ENCODE measurements at regions of chr3 and their contacts with region 1.

Region 1: GRCh38 chr3:47824541-47825473 is 21.9 kb downstream of the DHX30 start:
- DNase-seq: peak; percentile 73 to 85 (median 82)
- H3K4me3 ChIP-seq: peak overlapping the region; percentile 91 to 93
- H3K4me3 Mint-ChIP-seq: peak overlapping the region; percentile 88 to 91 (median 90)
- H3K27ac ChIP-seq: peak overlapping the region; percentile 85
- H3K27ac Mint-ChIP-seq: peak overlapping the region; percentile 83 to 95 (median 92)
- H3K4me1 ChIP-seq: peaks cover 28% of the 10 kb centered on the region
- H3K4me1 Mint-ChIP-seq: peaks cover 13 to 43% (median 34%) of the 10 kb centered on the region in 4 donors
- H3K27me3 ChIP-seq: no peaks in the 10 kb centered on the region
- H3K27me3 Mint-ChIP-seq: no peaks in the 10 kb centered on the region

Region 2: DNA sequence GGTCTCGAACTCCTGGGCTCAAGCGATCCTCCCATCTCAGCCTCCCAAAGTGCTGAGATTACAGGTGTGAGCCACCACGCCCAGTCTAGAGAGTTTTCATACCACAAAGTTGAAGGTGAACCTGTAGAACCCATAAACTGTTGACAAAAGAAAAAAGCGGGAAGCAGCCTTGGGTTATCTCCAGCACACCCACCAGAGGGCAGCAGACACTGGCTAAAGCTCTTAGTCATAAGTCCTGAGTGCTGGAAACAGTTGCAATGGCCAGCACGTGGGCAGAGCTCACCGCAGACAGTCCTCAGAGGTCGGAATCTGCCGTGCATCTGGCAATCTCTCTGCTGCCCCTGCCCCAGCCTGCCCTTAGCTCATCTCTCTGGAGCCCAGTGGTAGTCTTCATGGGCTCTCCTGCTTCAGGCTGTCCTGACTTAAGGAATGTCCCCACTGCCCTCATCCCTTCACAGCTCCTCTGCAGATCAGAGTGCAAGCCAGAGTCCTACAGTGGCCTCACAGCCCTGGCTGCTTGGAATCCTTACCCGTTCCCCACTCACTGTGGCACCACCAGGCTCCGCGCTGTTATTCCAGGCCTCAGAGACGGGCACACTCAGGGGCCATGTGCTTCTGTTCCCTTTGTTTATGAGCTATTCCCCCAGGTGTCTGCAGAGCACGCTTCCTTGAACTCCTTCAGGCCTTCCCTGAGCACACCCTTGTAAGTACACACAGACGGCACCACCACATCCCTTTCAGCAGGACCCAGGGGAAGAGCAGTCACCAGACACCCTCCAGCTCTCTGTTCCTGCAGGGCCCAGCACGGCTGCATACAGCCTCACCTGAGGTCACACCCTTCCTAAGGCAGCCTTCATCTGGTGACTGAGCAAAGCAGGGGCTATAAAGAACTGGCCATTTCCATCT is 302.5 kb before region 1 on chr3:
- CTCF ChIA-PET with region 1: interaction called, 18 read pairs
- POLR2A ChIA-PET with region 1: no interaction called
- intact Hi-C with region 1: no loop called
- DNase-seq: peak; percentile 49 to 76 (median 65)
- H3K4me3 ChIP-seq: no peak overlapping the region
- H3K4me3 Mint-ChIP-seq: no peak overlapping the region
- H3K27ac ChIP-seq: no peak overlapping the region
- H3K27ac Mint-ChIP-seq: peak overlapping the region in 2 of 7 donors; percentile 66
- H3K4me1 ChIP-seq: no peaks in the 10 kb centered on the region
- H3K4me1 Mint-ChIP-seq: peaks cover 0 to 1% (median 0%) of the 10 kb centered on the region in 4 donors
- H3K27me3 ChIP-seq: no peaks in the 10 kb centered on the region
- H3K27me3 Mint-ChIP-seq: no peaks in the 10 kb centered on the region

Region 3: GRCh38 chr3:47813551-47814177 is 11.1 kb before region 1 on chr3:
- CTCF ChIA-PET with region 1: interaction called, 42 read pairs
- POLR2A ChIA-PET with region 1: interaction called, 4 read pairs
- intact Hi-C with region 1: no loop called
- DNase-seq: no peak
- H3K4me3 ChIP-seq: no peak overlapping the region
- H3K4me3 Mint-ChIP-seq: no peak overlapping the region
- H3K27ac ChIP-seq: no peak overlapping the region
- H3K27ac Mint-ChIP-seq: peak overlapping the region in 1 of 7 donors; percentile 50
- H3K4me1 ChIP-seq: no peaks in the 10 kb centered on the region
- H3K4me1 Mint-ChIP-seq: peaks cover 0 to 8% (median 5%) of the 10 kb centered on the region in 4 donors
- H3K27me3 ChIP-seq: no peaks in the 10 kb centered on the region
- H3K27me3 Mint-ChIP-seq: no peaks in the 10 kb centered on the region

Region 4: DNA sequence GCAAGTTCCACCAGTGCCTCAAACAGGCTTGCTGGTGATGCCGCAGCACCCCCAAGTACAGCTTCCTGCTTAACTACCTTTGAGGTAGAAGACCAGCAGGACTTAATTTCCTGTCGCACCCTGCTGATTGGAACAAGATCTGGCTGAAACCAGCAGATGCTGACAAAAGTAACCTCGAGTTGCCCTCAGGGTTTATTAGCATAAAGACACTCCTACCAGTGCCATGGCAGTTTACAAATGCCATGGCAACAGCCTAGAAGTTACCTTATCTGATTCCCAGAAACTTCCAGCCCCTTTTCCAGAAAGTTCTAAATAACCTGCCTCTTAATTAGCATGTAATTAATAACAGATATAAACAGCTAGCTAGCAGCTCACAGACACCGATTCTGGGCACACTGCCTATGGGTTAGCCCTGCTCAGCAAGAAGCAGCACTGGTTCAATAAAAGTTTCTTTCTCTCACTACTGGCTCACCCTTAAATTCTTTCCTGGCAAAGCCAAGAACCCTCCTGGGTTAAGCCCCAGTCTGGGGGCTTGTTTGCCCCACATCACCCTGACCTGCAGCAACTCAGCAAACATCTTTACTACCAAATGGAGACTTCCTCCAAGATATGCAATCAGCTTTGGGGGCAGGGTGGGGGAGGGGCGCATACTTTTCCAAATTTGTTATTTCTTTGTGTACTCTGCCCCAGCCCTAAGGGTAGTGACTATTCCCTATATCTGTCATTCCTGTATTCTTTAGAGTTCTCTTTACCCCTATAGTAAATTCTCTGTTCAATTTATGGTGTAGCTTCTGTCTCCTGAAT is 137.2 kb after region 1 on chr3:
- CTCF ChIA-PET with region 1: interaction called, 11 read pairs
- POLR2A ChIA-PET with region 1: no interaction called
- intact Hi-C with region 1: no loop called
- DNase-seq: peak; percentile 32 to 58 (median 50)
- H3K4me3 ChIP-seq: no peak overlapping the region
- H3K4me3 Mint-ChIP-seq: peak overlapping the region in 7 of 8 donors; percentile 32 to 79 (median 43)
- H3K27ac ChIP-seq: no peak overlapping the region
- H3K27ac Mint-ChIP-seq: peak overlapping the region; percentile 77 to 90 (median 85)
- H3K4me1 ChIP-seq: peaks cover 21% of the 10 kb centered on the region
- H3K4me1 Mint-ChIP-seq: peaks cover 28 to 31% (median 30%) of the 10 kb centered on the region in 4 donors
- H3K27me3 ChIP-seq: no peaks in the 10 kb centered on the region
- H3K27me3 Mint-ChIP-seq: no peaks in the 10 kb centered on the region

Region 5: DNA sequence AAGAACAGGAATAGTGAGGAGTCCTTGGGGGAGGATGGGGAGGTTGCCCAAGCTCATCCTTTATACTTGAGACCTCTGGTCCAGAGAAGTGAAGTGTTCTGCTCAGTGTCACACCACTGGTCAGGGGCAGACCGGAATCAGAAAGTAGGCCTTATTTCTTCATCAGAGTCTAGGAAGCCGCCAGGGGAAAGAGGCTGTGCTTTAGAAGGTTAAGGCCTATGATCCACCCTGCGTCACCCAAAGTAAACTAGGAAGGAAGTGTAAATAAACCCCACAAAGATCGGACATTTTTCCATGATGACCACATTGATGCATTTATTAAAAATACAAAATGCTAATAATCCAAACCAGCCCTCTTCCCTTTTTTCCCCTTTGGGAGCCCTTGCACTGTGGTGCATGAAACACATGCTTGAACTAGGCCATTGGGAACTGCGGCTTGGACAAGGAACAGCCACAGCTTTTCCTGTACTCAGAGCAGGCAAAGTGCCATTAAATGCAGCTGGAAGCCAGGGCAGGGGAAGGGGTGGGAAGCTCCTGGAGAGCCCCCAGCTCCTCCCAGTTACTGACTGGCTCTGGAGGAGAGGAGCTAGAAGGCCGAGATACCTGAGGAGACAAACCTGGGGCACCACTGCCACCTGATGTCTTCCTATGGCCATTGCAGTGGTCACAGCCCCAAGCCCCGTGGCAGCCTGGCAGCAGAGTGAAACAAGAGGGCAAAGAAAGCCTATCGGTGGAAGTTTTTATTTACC is 326.4 kb after region 1 on chr3:
- CTCF ChIA-PET with region 1: interaction called, 6 read pairs
- POLR2A ChIA-PET with region 1: no interaction called
- intact Hi-C with region 1: loop called (anchors 2 kb)
- DNase-seq: peak in 4 of 5 donors; percentile 39 to 51 (median 44)
- H3K4me3 ChIP-seq: no peak overlapping the region
- H3K4me3 Mint-ChIP-seq: no peak overlapping the region
- H3K27ac ChIP-seq: no peak overlapping the region
- H3K27ac Mint-ChIP-seq: no peak overlapping the region
- H3K4me1 ChIP-seq: no peaks in the 10 kb centered on the region
- H3K4me1 Mint-ChIP-seq: no peaks in the 10 kb centered on the region
- H3K27me3 ChIP-seq: no peaks in the 10 kb centered on the region
- H3K27me3 Mint-ChIP-seq: peaks cover 2% of the 10 kb centered on the region in 2 donors

Region 6: DNA sequence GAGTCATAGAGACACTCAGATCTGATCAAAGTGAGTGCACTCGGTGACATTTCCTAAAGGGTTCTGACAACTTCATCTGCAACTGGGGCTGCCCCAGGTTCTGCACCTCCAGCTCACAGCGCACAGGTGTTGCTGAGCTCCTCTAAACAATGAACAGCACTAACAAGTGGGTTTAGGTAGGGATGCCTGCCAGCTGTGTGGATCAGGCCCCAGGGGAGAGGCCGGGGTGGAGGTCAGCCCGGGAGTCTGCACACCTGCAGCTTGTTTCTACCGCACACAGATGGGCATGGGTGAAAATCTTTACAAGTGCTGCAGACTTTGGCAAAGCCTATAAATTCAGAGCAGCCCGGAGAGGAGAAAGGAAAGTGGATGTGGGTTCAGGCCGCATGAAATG is 547.6 kb after region 1 on chr3:
- CTCF ChIA-PET with region 1: no interaction called
- POLR2A ChIA-PET with region 1: no interaction called
- intact Hi-C with region 1: no loop called
- DNase-seq: no peak
- H3K4me3 ChIP-seq: no peak overlapping the region
- H3K4me3 Mint-ChIP-seq: no peak overlapping the region
- H3K27ac ChIP-seq: no peak overlapping the region
- H3K27ac Mint-ChIP-seq: no peak overlapping the region
- H3K4me1 ChIP-seq: no peaks in the 10 kb centered on the region
- H3K4me1 Mint-ChIP-seq: no peaks in the 10 kb centered on the region
- H3K27me3 ChIP-seq: no peaks in the 10 kb centered on the region
- H3K27me3 Mint-ChIP-seq: no peaks in the 10 kb centered on the region